WTC11 (cell line): ENCODE measurements at regions of chr6 and their contacts with region 1.

Region 1: DNA sequence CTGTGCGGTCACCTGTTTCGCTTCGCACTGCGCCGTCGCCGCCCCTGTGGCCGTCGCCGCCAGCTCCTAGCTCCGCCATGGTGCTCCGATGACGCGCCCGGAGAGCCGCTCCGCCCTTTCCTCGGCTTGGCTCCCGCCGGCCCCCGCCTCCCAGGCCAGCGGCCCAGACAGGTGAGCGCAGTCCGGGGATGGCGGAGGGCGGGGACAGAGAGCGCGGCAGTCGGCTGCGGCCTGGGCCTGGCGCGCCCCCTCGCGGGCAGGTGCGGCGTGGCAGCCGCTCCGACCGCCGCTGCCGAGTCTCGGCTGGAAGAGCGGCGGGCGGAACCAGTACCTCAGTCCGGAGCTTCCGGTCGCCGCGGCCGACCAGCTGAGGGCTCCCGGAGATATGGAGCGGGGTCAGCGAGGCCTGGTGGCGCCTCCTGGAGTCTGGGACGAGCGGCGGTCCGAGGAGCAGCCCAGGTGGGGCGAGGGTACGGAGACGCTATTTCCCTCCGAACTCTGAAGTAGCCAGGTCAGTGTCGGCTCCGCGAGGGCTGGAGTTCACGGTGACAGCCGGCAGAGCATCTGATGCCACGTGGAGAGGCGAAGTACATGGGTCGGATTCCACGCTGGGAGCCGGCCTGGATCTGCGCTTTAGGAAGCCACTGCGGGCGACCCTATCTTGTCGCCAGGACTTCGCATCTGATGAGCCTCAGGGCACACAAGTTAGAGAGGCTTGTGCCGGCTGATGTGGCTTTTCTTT is at the start of gene MAP7:
- DNase-seq: peak; percentile 95
- ATAC-seq: peak; percentile 89
- H3K4me3 Mint-ChIP-seq: peak within 1 kb of the TSS; percentile 73
- H3K27ac Mint-ChIP-seq: peak within 1 kb of the TSS; percentile 16; the same call in 1 of the 2 replicates
- H3K4me1 Mint-ChIP-seq: peaks cover 38% of the 10 kb centered on the region
- H3K27me3 Mint-ChIP-seq: peaks cover 38% of the 10 kb centered on the region
- CTCF ChIP-seq: peak; percentile 99
- total RNA-seq, gene MAP7: 56.6 to 60.5 TPM (median 59.1 TPM) in 3 replicates

Region 2: DNA sequence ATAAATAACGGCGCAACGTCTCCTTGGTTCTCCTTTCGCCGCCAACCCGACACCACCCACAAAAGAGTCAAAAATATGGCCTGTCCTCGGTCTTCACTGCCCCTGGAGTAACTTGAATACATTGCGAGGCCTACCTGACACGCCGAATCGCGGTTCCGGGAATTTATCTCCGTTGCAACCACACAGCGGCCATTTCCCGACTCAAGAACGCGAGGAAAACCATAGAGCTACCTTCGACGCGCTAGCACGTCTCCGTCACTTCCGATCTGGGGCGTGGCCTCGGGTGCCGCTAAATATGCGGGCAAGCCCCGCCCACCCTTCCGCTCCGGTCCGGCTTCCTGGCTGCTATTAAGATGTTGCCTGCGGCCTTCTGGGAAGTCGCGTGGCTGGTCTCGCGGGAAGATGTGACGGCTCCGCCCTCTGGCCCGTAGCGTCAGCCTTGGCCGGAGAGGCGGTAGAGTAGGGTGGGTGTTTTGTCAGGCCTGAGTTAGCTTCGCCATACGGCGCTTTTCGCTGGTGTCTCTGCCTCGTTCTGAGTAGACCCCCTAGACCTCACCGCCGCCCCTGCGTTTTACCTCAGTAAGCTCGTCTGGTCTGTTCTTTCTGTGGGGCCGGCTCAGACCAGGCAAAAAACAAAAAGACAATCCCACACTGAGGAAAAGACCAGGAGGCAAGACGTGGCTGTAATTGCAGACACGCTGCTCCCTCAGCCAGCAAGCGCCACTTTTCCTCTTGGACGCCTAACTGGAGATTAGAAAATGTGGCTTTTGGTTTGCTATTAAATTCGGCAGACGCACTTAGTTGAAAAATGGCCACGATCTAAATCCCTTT is 260.7 kb before region 1 on chr6 and contains the start of gene BCLAF1:
- CTCF ChIA-PET with region 1: interaction called, 19 read pairs
- POLR2A ChIA-PET with region 1: interaction called, 11 read pairs
- DNase-seq: peak; percentile 99
- ATAC-seq: peak; percentile 95
- H3K4me3 Mint-ChIP-seq: peak within 1 kb of the TSS; percentile 100
- H3K27ac Mint-ChIP-seq: peak within 1 kb of the TSS; percentile 100
- H3K4me1 Mint-ChIP-seq: peaks cover 42% of the 10 kb centered on the region
- H3K27me3 Mint-ChIP-seq: no peaks in the 10 kb centered on the region
- CTCF ChIP-seq: no peak
- total RNA-seq, gene BCLAF1: 147 to 184 TPM (median 162 TPM) in 3 replicates

Region 3: DNA sequence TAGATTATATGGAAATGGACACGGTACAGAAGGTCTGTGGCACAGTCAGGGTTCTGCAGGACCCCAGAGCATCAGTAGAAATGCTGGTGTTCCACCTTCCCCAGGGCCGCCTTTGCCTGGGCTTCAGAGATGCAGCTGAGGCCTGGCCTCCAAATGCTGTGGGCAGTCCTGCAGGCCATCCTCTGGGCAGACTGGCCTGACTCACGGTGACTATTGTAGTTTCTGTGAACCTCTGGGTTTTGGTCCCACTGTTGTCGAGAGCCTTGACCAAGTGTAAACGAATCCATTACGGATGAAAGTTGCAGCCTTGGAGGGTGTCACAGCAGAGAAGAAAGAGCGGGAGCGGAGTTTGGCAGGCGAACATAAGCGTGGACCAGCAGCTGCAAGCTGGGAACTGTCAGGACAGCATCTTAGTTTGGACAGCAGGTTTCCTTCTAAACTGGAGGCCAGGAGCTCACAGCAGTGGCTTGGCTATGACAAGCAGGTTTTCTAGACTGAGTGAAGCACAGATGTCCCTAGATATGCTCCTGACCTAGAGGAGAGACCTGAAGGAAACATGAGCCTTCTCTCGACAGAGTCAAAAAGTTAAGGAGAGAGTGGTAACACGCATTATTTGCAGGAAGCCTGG is 214.7 kb before region 1 on chr6:
- CTCF ChIA-PET with region 1: interaction called, 23 read pairs
- POLR2A ChIA-PET with region 1: no interaction called
- DNase-seq: no peak
- ATAC-seq: no peak
- H3K4me3 Mint-ChIP-seq: no peak overlapping the region
- H3K27ac Mint-ChIP-seq: peak overlapping the region; percentile 41; the same call in 1 of the 2 replicates
- H3K4me1 Mint-ChIP-seq: peaks cover 18% of the 10 kb centered on the region; the same call in 1 of the 2 replicates
- H3K27me3 Mint-ChIP-seq: no peaks in the 10 kb centered on the region
- CTCF ChIP-seq: no peak

Region 4: GRCh38 chr6:136526196-136526930 is 24.1 kb before region 1 on chr6:
- CTCF ChIA-PET with region 1: interaction called, 70 read pairs
- POLR2A ChIA-PET with region 1: interaction called, 8 read pairs
- DNase-seq: peak; percentile 72
- ATAC-seq: peak; percentile 92
- H3K4me3 Mint-ChIP-seq: peak overlapping the region; percentile 38
- H3K27ac Mint-ChIP-seq: peak overlapping the region; percentile 42; the same call in 1 of the 2 replicates
- H3K4me1 Mint-ChIP-seq: peaks cover 60% of the 10 kb centered on the region
- H3K27me3 Mint-ChIP-seq: no peaks in the 10 kb centered on the region
- CTCF ChIP-seq: no peak

Region 5: GRCh38 chr6:136539967-136540652 is 10.4 kb before region 1 on chr6:
- CTCF ChIA-PET with region 1: interaction called, 24 read pairs
- POLR2A ChIA-PET with region 1: no interaction called
- DNase-seq: no peak
- ATAC-seq: no peak
- H3K4me3 Mint-ChIP-seq: no peak overlapping the region
- H3K27ac Mint-ChIP-seq: 0 out of 2 replicates have a peak overlapping the region, but pooled peaks have one; percentile 21
- H3K4me1 Mint-ChIP-seq: peaks cover 65% of the 10 kb centered on the region
- H3K27me3 Mint-ChIP-seq: no peaks in the 10 kb centered on the region
- CTCF ChIP-seq: no peak

Region 6: GRCh38 chr6:136792410-136793262 is 242.1 kb after region 1 on chr6 and contains the start of gene MAP3K5:
- CTCF ChIA-PET with region 1: interaction called, 11 read pairs
- POLR2A ChIA-PET with region 1: no interaction called
- DNase-seq: peak; percentile 86
- ATAC-seq: peak; percentile 82
- H3K4me3 Mint-ChIP-seq: peak within 1 kb of the TSS; percentile 84
- H3K27ac Mint-ChIP-seq: no peak within 1 kb of the TSS
- H3K4me1 Mint-ChIP-seq: peaks cover 10% of the 10 kb centered on the region; the same call in 1 of the 2 replicates
- H3K27me3 Mint-ChIP-seq: peaks cover 57% of the 10 kb centered on the region
- CTCF ChIP-seq: peak; percentile 55
- total RNA-seq, gene MAP3K5: 1.6 to 1.9 TPM (median 1.7 TPM) in 3 replicates